ENCODE measurements at regions of chr16 and their contacts with region 1.

Region 1: DNA sequence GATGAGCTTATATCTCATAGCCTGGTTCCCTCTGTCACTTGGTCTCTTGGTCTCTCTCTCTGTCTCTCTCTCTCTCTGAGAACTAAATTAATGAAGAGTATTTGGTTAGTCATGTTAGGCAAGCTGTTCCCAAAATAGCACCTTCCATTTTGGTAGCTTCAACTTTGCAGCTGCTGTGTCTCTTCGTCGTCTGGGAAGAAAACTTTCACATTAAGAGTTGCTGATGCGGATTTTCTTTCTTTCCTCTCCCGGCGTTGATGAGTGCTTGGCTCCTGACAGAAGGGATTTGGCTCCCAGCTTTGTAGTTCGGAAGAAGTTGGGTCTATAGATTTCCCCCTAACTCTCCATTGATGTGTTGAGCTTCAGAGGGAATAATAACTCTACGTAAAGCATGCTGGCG is at the start of gene RBFOX1:
- DNase-seq: no peak
- ATAC-seq: peak; percentile 69 to 75 (median 73)
- H3K4me3 ChIP-seq: peak within 1 kb of the TSS; percentile 75
- H3K27ac ChIP-seq: peak within 1 kb of the TSS; percentile 98
- H3K4me1 ChIP-seq: peaks cover 12% of the 10 kb centered on the region
- H3K27me3 ChIP-seq: no peaks in the 10 kb centered on the region
- CTCF ChIP-seq: no peak
- total RNA-seq, gene RBFOX1: 113 to 141 (median 127) TPM

Region 2: GRCh38 chr16:7363422-7364417 is 31.1 kb after region 1 on chr16:
- intact Hi-C with region 1: loop called in 1 of 2 experiments (anchors 2 kb)
- DNase-seq: peak; percentile 45 to 86
- ATAC-seq: peak; percentile 60 to 79 (median 72)
- H3K4me3 ChIP-seq: peak overlapping the region; percentile 49
- H3K27ac ChIP-seq: peak overlapping the region; percentile 83
- H3K4me1 ChIP-seq: peaks cover 79% of the 10 kb centered on the region
- H3K27me3 ChIP-seq: no peaks in the 10 kb centered on the region
- CTCF ChIP-seq: no peak

Region 3: GRCh38 chr16:7503666-7504065 is 171.1 kb after region 1 on chr16:
- intact Hi-C with region 1: loop called in 1 of 2 experiments (anchors 5 kb)
- DNase-seq: no peak
- ATAC-seq: peak; percentile 46 to 65 (median 54)
- H3K4me3 ChIP-seq: peak overlapping the region; percentile 43
- H3K27ac ChIP-seq: peak overlapping the region; percentile 87
- H3K4me1 ChIP-seq: peaks cover 76% of the 10 kb centered on the region
- H3K27me3 ChIP-seq: no peaks in the 10 kb centered on the region
- CTCF ChIP-seq: no peak

Measured in psoas muscle (tissue), 8 donors.